Activated naive CD4-positive, alpha-beta T cell treated with anti-CD3 and anti-CD28 coated beads, Interleukin-2, amount 10 ng/mL, durations not matched to agents 7 days and 5 days (primary cell): ENCODE measurements at regions of chr7 and their contacts with region 1.

Region 1: DNA sequence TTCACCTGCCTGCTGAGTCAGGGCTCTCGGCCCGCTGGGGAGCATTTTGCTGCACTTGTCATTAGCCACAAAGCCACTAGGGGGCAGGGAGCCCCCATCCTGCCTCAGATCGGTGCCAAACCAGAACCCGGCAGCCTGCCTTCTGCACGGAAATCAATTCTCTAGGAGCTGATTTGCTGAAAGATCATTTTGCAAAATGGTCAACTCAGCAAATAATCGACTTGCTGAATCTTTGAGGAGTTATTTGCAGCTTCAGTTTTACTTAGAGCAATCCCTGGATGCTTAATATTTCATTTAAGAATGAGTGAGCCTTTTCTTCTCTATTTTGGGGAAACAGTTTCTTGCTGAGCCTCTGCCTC is 1.7 kb upstream of the GIMAP8 start:
- DNase-seq: peak; percentile 92
- H3K4me3 Mint-ChIP-seq: peak overlapping the region; percentile 89
- H3K27ac Mint-ChIP-seq: peak overlapping the region; percentile 91
- H3K4me1 Mint-ChIP-seq: peaks cover 52% of the 10 kb centered on the region
- H3K27me3 Mint-ChIP-seq: no peaks in the 10 kb centered on the region

Region 2: GRCh38 chr7:150481186-150481920 is 32.6 kb after region 1 on chr7:
- CTCF ChIA-PET with region 1: interaction called, 19 read pairs
- DNase-seq: peak; percentile 77
- H3K4me3 Mint-ChIP-seq: peak overlapping the region; percentile 79
- H3K27ac Mint-ChIP-seq: peak overlapping the region; percentile 99
- H3K4me1 Mint-ChIP-seq: peaks cover 98% of the 10 kb centered on the region
- H3K27me3 Mint-ChIP-seq: no peaks in the 10 kb centered on the region

Region 3: DNA sequence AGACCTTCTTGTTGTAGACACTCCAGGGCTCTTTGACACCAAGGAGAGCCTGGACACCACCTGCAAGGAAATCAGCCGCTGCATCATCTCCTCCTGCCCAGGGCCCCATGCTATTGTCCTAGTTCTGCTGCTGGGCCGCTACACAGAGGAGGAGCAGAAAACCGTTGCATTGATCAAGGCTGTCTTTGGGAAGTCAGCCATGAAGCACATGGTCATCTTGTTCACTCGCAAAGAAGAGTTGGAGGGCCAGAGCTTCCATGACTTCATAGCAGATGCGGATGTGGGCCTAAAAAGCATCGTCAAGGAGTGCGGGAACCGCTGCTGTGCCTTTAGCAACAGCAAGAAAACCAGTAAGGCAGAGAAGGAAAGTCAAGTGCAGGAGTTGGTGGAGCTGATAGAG is 71.4 kb after region 1 on chr7:
- CTCF ChIA-PET with region 1: interaction called, 44 read pairs
- DNase-seq: peak; percentile 66
- H3K4me3 Mint-ChIP-seq: peak overlapping the region; percentile 98
- H3K27ac Mint-ChIP-seq: peak overlapping the region; percentile 88
- H3K4me1 Mint-ChIP-seq: peaks cover 38% of the 10 kb centered on the region
- H3K27me3 Mint-ChIP-seq: no peaks in the 10 kb centered on the region

Region 4: DNA sequence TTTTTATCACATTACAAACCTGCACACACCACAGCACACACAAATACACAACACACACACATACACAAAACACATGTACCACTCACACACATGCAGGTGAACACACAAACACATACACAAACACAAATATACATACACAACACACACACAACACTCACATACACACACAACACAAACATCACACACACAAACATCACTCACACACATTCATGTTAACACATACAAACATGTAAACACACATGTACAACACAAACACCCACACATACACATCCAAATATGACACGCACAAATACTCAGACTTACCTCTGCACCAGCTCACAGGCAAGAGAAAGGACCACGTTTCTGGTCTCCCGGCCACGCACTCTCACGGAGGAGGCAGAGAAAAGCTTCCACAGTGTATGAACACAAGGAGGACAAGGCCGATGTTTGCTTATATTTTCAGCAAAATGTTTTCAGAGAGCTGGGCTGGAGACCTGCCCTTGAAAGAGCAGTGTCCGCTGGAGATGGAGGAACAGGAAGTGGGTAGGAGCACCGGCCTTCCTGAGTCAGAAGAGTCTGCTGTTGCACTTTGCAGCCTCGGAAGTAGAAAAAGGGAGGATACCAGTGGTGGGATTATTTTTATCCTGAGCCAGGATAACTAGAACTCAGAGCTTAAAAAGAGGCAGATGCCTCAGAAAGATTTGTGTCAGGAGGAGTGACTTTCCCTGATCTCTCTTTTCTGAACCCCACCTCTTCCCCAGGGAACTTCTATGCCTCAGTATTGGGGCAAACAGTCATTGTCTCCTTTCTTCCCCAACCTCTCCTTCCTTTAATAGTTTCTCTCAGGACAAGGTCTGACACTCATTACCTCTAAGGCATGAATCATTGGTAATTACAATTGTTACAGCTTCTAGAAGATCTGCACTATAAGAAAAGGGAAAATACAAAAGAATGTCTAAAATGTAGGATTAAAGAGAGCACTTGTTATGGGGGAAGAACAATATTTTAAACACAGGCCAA is 183.4 kb after region 1 on chr7 and contains the start of gene GIMAP6:
- CTCF ChIA-PET with region 1: interaction called, 18 read pairs
- DNase-seq: peak; percentile 62
- H3K4me3 Mint-ChIP-seq: peak within 1 kb of the TSS; percentile 83
- H3K27ac Mint-ChIP-seq: peak within 1 kb of the TSS; percentile 86
- H3K4me1 Mint-ChIP-seq: peaks cover 66% of the 10 kb centered on the region
- H3K27me3 Mint-ChIP-seq: no peaks in the 10 kb centered on the region

Region 5: GRCh38 chr7:150753826-150754603 is 305.2 kb after region 1 on chr7:
- CTCF ChIA-PET with region 1: interaction called, 72 read pairs
- DNase-seq: no peak
- H3K4me3 Mint-ChIP-seq: peak overlapping the region; percentile 31
- H3K27ac Mint-ChIP-seq: peak overlapping the region; percentile 92
- H3K4me1 Mint-ChIP-seq: peaks cover 77% of the 10 kb centered on the region
- H3K27me3 Mint-ChIP-seq: no peaks in the 10 kb centered on the region